Gastrocnemius medialis (tissue), 4 donors: ENCODE measurements at regions of chr4 and their contacts with region 1.

Region 1: GRCh38 chr4:84529169-84529751 is 30.2 kb upstream of the NKX6-1 start:
- DNase-seq: no peak
- ATAC-seq: no peak
- H3K4me3 ChIP-seq: no peak overlapping the region
- H3K27ac ChIP-seq: no peak overlapping the region
- H3K4me1 ChIP-seq: no peaks in the 10 kb centered on the region
- H3K27me3 ChIP-seq: peaks cover 0 to 4% (median 0%) of the 10 kb centered on the region in 3 donors
- CTCF ChIP-seq: peak in 3 of 5 experiments; percentile 8 to 57 (median 37)
- POLR2A ChIP-seq: no peak

Region 2: DNA sequence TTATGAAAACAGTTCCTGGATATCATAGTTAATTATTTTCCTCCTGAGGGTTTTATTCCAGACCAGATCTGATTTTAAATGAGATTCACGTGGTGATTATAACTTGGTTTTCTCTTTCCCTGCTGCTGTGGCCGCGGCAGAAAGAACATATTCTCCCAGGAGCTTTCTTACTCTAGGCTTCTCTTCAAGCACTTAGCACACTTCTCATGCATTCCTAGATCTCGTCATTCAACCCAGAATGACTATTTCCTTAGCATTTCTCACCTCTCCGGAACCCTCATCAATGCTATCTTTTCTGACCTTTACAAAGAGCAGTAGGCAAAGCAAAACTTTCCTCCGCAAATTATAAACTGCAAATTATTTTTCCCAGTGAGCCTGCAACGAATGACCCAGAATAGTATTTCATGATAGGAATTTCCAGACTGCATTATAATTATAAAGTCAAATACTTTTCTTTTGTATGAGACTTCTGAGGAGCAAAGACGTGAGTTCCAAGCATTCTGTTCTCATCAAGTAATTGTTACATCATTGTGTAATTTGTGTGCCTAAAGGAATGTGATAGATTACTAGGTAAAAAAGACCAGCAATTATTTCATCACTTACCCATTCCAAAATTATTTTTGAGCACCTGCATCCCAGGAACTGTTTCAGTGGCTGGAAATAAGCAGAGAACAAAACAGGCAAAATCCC is 870.3 kb before region 1 on chr4:
- in situ Hi-C with region 1: loop called in 1 of 4 experiments (anchors 25 kb)
- intact Hi-C with region 1: no loop called
- DNase-seq: no peak
- ATAC-seq: no peak
- H3K4me3 ChIP-seq: no peak overlapping the region
- H3K27ac ChIP-seq: no peak overlapping the region
- H3K4me1 ChIP-seq: no peaks in the 10 kb centered on the region
- H3K27me3 ChIP-seq: no peaks in the 10 kb centered on the region
- CTCF ChIP-seq: no peak
- POLR2A ChIP-seq: no peak

Region 3: GRCh38 chr4:84578540-84579402 is 49.5 kb after region 1 on chr4:
- in situ Hi-C with region 1: no loop called
- intact Hi-C with region 1: no loop called
- DNase-seq: no peak
- ATAC-seq: no peak
- H3K4me3 ChIP-seq: no peak overlapping the region
- H3K27ac ChIP-seq: no peak overlapping the region
- H3K4me1 ChIP-seq: peaks cover 4 to 5% of the 10 kb centered on the region in 2 donors
- H3K27me3 ChIP-seq: peaks cover 4 to 9% (median 6%) of the 10 kb centered on the region in 3 donors
- CTCF ChIP-seq: no peak
- POLR2A ChIP-seq: no peak